CD8-positive, alpha-beta T cell (primary cell): ENCODE measurements at regions of chr9 and their contacts with region 1.

Region 1: GRCh38 chr9:343773-344172 is 129.1 kb downstream of the DOCK8 start:
- DNase-seq: no peak
- ATAC-seq: no peak
- H3K4me3 ChIP-seq: no peak overlapping the region
- H3K4me3 Mint-ChIP-seq: no peak overlapping the region
- H3K27ac ChIP-seq: no peak overlapping the region
- H3K27ac Mint-ChIP-seq: no peak overlapping the region
- H3K4me1 ChIP-seq: no peaks in the 10 kb centered on the region
- H3K4me1 Mint-ChIP-seq: peaks cover 7% of the 10 kb centered on the region
- H3K27me3 ChIP-seq: no peaks in the 10 kb centered on the region
- H3K27me3 Mint-ChIP-seq: no peaks in the 10 kb centered on the region
- CTCF ChIP-seq: no peak

Region 2: GRCh38 chr9:306887-307286 is 36.9 kb before region 1 on chr9:
- CTCF ChIA-PET with region 1: no interaction called
- POLR2A ChIA-PET with region 1: no interaction called
- intact Hi-C with region 1: loop called in 1 of 2 experiments (anchors 5 kb)
- DNase-seq: peak in 8 of 9 experiments; percentile 15 to 78 (median 46)
- ATAC-seq: peak; percentile 58
- H3K4me3 ChIP-seq: no peak overlapping the region
- H3K4me3 Mint-ChIP-seq: no peak overlapping the region
- H3K27ac ChIP-seq: no peak overlapping the region
- H3K27ac Mint-ChIP-seq: peak overlapping the region; percentile 64
- H3K4me1 ChIP-seq: no peaks in the 10 kb centered on the region
- H3K4me1 Mint-ChIP-seq: peaks cover 2% of the 10 kb centered on the region
- H3K27me3 ChIP-seq: no peaks in the 10 kb centered on the region
- H3K27me3 Mint-ChIP-seq: no peaks in the 10 kb centered on the region
- CTCF ChIP-seq: no peak

Region 3: GRCh38 chr9:573671-574410 is 230.1 kb after region 1 on chr9:
- CTCF ChIA-PET with region 1: no interaction called
- POLR2A ChIA-PET with region 1: no interaction called
- intact Hi-C with region 1: no loop called
- DNase-seq: no peak
- ATAC-seq: no peak
- H3K4me3 ChIP-seq: no peak overlapping the region
- H3K4me3 Mint-ChIP-seq: no peak overlapping the region
- H3K27ac ChIP-seq: no peak overlapping the region
- H3K27ac Mint-ChIP-seq: no peak overlapping the region
- H3K4me1 ChIP-seq: no peaks in the 10 kb centered on the region
- H3K4me1 Mint-ChIP-seq: no peaks in the 10 kb centered on the region
- H3K27me3 ChIP-seq: no peaks in the 10 kb centered on the region
- H3K27me3 Mint-ChIP-seq: peaks cover 5% of the 10 kb centered on the region
- CTCF ChIP-seq: no peak

Region 4: DNA sequence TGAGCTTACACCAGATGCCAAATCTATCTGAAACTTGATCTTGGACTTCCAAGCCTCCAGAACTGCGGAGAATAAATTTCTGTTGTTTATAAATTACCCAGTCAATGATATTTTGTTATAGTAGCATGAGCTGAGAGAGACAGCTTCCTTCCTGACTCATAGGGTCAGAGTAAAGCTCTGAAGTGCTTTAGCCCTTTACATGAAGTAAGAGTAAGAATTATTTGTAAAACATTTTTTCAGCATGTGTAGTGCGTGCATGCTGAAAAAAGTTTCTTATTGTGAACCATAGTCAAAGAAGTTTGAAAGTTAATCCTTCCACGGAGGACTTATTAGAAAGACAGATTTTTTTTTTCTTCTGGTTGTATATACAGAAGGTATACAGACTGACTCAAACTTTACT is 878.7 kb after region 1 on chr9:
- CTCF ChIA-PET with region 1: no interaction called
- POLR2A ChIA-PET with region 1: no interaction called
- intact Hi-C with region 1: no loop called
- DNase-seq: no peak
- ATAC-seq: no peak
- H3K4me3 ChIP-seq: no peak overlapping the region
- H3K4me3 Mint-ChIP-seq: no peak overlapping the region
- H3K27ac ChIP-seq: no peak overlapping the region
- H3K27ac Mint-ChIP-seq: no peak overlapping the region
- H3K4me1 ChIP-seq: no peaks in the 10 kb centered on the region
- H3K4me1 Mint-ChIP-seq: no peaks in the 10 kb centered on the region
- H3K27me3 ChIP-seq: peaks cover 0 to 2% of the 10 kb centered on the region in 2 experiments
- H3K27me3 Mint-ChIP-seq: no peaks in the 10 kb centered on the region
- CTCF ChIP-seq: no peak

Region 5: DNA sequence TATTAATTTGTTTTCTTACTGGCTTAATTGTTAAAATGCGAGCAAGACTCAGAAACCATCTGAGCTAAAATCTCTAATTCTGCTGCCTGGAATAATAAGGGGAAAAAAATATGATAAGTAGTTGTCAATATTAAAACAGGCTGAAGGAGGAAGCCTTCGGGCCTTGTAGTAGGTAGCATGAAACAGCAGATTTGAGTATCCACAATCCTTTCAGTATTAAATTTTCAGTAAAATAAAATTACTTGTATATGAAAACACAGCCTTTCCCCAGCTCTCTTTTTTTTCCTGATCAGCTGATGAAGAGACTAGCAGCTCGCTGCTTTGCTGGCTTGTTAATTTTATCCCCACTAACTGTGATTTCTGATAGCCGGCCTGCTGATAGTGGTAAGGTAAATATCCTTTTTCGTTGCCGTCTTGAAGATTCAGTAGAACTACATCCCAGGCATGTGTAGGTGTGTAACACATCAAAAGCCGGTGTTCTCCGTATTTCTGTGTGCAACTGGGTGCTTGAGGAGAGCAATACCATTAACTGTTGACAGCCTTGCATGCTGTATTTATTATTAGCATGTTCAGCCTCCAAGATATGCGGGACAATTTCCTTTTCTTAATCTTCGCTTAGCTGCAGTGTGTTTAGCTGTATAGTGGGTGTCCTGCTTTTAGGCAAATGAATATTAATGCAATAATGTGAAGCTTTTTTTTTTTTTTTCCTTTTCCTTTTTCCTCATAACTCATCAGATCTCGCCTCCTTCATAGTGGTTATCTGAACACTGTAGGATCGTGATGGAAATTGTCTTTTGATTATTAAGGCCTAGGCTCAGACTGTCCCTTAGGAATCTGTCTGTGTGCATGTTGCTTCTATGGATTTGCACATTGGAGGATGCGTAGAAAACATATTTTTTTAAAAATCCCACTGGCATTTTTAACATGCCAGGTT is 1816.0 kb after region 1 on chr9:
- CTCF ChIA-PET with region 1: no interaction called
- POLR2A ChIA-PET with region 1: no interaction called
- intact Hi-C with region 1: no loop called
- DNase-seq: no peak
- ATAC-seq: no peak
- H3K4me3 ChIP-seq: no peak overlapping the region
- H3K4me3 Mint-ChIP-seq: peak overlapping the region; percentile 38
- H3K27ac ChIP-seq: peak overlapping the region in 1 of 2 experiments; percentile 33
- H3K27ac Mint-ChIP-seq: peak overlapping the region; percentile 67
- H3K4me1 ChIP-seq: peaks cover 31% of the 10 kb centered on the region
- H3K4me1 Mint-ChIP-seq: peaks cover 74% of the 10 kb centered on the region
- H3K27me3 ChIP-seq: no peaks in the 10 kb centered on the region
- H3K27me3 Mint-ChIP-seq: no peaks in the 10 kb centered on the region
- CTCF ChIP-seq: no peak